ENCODE measurements at regions of chr5 and their contacts with region 1.

Region 1: DNA sequence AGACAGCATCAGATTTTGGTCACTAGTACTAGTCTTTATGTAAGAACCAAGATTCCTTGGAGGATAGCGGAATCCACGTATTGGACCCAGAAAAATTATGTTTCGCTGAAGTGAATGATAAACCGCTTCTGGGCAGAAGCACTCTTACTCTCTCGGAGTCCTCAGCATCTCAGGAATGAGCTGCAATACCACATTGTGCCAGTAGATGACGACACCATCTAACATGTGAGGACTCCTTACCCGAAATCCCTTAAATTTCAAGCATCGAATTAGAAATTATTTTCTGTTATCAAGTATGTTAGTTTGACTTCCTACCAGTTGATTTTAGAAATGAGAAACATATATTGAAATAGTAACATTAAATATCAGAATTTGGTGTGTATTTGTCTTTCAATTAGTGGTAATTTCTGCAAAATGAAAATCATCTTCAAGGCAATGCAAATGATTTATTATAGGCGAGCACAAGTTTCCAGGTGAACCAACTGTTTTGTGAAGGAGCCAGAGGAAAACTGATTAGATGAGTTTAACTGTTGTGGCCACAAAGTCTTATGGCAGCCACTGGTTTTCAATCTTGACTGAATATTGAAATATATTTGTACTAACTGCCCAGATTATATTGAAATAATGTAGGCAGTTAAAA is 66.0 kb upstream of the CAMK4 start:
- DNase-seq: peak; percentile 82
- H3K4me3 Mint-ChIP-seq: peak overlapping the region; percentile 17
- H3K27ac Mint-ChIP-seq: no peak overlapping the region
- H3K4me1 Mint-ChIP-seq: peaks cover 2% of the 10 kb centered on the region
- H3K27me3 Mint-ChIP-seq: no peaks in the 10 kb centered on the region

Region 2: DNA sequence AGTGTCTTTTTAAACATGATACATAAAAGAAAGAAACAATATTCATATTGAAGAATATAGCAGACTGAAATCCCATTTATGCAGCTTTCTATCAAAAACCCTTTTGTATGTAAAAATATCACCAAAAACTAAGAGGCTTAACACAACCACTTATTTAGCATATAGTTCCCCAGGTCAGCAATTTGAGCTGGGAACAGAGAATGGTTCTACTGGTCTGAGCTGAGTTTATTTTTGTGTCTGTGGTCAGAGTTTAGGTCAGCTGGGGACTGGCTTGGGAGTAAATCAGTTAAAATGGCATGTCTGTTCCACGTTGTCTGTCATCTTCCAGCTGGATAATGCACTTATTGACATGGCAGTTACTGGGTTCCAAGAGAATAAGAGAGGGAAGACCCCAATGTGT is 596.7 kb before region 1 on chr5:
- CTCF ChIA-PET with region 1: no interaction called
- POLR2A ChIA-PET with region 1: no interaction called
- intact Hi-C with region 1: no loop called
- DNase-seq: no peak
- H3K4me3 Mint-ChIP-seq: no peak overlapping the region
- H3K27ac Mint-ChIP-seq: no peak overlapping the region
- H3K4me1 Mint-ChIP-seq: no peaks in the 10 kb centered on the region
- H3K27me3 Mint-ChIP-seq: peaks cover 6% of the 10 kb centered on the region

Region 3: GRCh38 chr5:111229871-111230810 is 71.9 kb after region 1 on chr5:
- CTCF ChIA-PET with region 1: interaction called, 12 read pairs
- POLR2A ChIA-PET with region 1: interaction called, 3 read pairs
- intact Hi-C with region 1: no loop called
- DNase-seq: no peak
- H3K4me3 Mint-ChIP-seq: peak overlapping the region; percentile 66
- H3K27ac Mint-ChIP-seq: peak overlapping the region; percentile 85
- H3K4me1 Mint-ChIP-seq: peaks cover 81% of the 10 kb centered on the region
- H3K27me3 Mint-ChIP-seq: no peaks in the 10 kb centered on the region

Region 4: GRCh38 chr5:111278845-111279504 is 120.8 kb after region 1 on chr5:
- CTCF ChIA-PET with region 1: interaction called, 212 read pairs
- POLR2A ChIA-PET with region 1: no interaction called
- intact Hi-C with region 1: loop called (anchors 1 kb)
- DNase-seq: peak; percentile 92
- H3K4me3 Mint-ChIP-seq: no peak overlapping the region
- H3K27ac Mint-ChIP-seq: no peak overlapping the region
- H3K4me1 Mint-ChIP-seq: peaks cover 60% of the 10 kb centered on the region
- H3K27me3 Mint-ChIP-seq: no peaks in the 10 kb centered on the region

Region 5: GRCh38 chr5:111512375-111513130 is 354.3 kb after region 1 on chr5 and contains the start of gene STARD4:
- CTCF ChIA-PET with region 1: no interaction called
- POLR2A ChIA-PET with region 1: no interaction called
- intact Hi-C with region 1: loop called (anchors 2 kb)
- DNase-seq: peak; percentile 96
- H3K4me3 Mint-ChIP-seq: peak within 1 kb of the TSS; percentile 88
- H3K27ac Mint-ChIP-seq: peak within 1 kb of the TSS; percentile 94
- H3K4me1 Mint-ChIP-seq: peaks cover 35% of the 10 kb centered on the region
- H3K27me3 Mint-ChIP-seq: no peaks in the 10 kb centered on the region
- total RNA-seq, gene STARD4: 49.5 to 49.9 TPM

Region 6: GRCh38 chr5:111550279-111551020 is 392.2 kb after region 1 on chr5:
- CTCF ChIA-PET with region 1: interaction called, 3 read pairs
- POLR2A ChIA-PET with region 1: no interaction called
- intact Hi-C with region 1: loop called (anchors 2 kb)
- DNase-seq: peak; percentile 76
- H3K4me3 Mint-ChIP-seq: no peak overlapping the region
- H3K27ac Mint-ChIP-seq: no peak overlapping the region
- H3K4me1 Mint-ChIP-seq: peaks cover 18% of the 10 kb centered on the region
- H3K27me3 Mint-ChIP-seq: peaks cover 1% of the 10 kb centered on the region

Region 7: GRCh38 chr5:111830333-111830732 is 672.1 kb after region 1 on chr5:
- CTCF ChIA-PET with region 1: no interaction called
- POLR2A ChIA-PET with region 1: no interaction called
- intact Hi-C with region 1: no loop called
- DNase-seq: no peak
- H3K4me3 Mint-ChIP-seq: no peak overlapping the region
- H3K27ac Mint-ChIP-seq: no peak overlapping the region
- H3K4me1 Mint-ChIP-seq: no peaks in the 10 kb centered on the region
- H3K27me3 Mint-ChIP-seq: peaks cover 2% of the 10 kb centered on the region